CD4-positive, alpha-beta memory T cell (primary cell): ENCODE measurements at regions of chr19 and their contacts with region 1.

Region 1: DNA sequence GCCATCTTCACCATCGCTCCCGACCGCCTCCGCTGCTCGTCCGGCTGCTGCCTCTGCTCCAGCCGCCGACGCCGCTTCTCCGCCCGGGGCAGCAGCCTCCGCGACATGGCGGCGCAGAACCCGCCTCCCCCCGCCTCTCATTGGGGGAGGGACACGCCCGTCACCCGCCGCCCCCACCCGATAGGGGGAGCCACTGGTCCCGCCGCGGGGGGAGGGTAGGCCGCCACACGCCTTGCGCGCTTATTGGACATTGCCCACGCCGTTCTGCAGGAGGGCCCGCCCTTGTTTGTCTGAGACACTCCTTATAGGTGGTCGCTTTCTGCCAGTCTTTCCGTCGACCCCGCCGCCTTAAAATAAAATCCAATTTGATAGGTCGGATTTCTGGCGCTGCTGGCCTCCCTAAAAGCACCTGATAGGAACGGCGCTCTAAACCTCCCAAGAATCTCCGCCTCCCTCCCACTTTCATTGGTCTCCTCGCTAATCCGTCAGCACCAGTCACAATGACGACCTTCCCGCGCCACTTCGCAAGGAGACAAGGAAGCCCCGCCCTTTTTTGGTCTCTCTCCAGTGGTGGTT is at the start of gene HNRNPL:
- DNase-seq: peak; percentile 99 to 100 (median 100)
- H3K4me3 ChIP-seq: peak within 1 kb of the TSS; percentile 94 to 98
- H3K4me3 Mint-ChIP-seq: peak within 1 kb of the TSS; percentile 94 to 97 (median 96)
- H3K27ac ChIP-seq: peak within 1 kb of the TSS; percentile 99
- H3K27ac Mint-ChIP-seq: peak within 1 kb of the TSS; percentile 83 to 100 (median 99)
- H3K4me1 ChIP-seq: peaks cover 58% of the 10 kb centered on the region
- H3K4me1 Mint-ChIP-seq: peaks cover 30 to 72% (median 50%) of the 10 kb centered on the region in 4 donors
- H3K27me3 ChIP-seq: no peaks in the 10 kb centered on the region
- H3K27me3 Mint-ChIP-seq: peaks cover 1% of the 10 kb centered on the region in 2 donors
- total RNA-seq, gene HNRNPL: 329 to 351 TPM

Region 2: GRCh38 chr19:38647368-38647965 is 202.5 kb before region 1 on chr19 and contains the start of gene ACTN4:
- CTCF ChIA-PET with region 1: no interaction called
- POLR2A ChIA-PET with region 1: interaction called, 9 read pairs
- intact Hi-C with region 1: loop called (anchors 1 kb)
- DNase-seq: peak; percentile 98 to 100 (median 100)
- H3K4me3 ChIP-seq: peak within 1 kb of the TSS; percentile 80 to 81
- H3K4me3 Mint-ChIP-seq: peak within 1 kb of the TSS; percentile 91 to 98 (median 95)
- H3K27ac ChIP-seq: peak within 1 kb of the TSS; percentile 74
- H3K27ac Mint-ChIP-seq: peak within 1 kb of the TSS; percentile 85 to 94 (median 91)
- H3K4me1 ChIP-seq: peaks cover 50% of the 10 kb centered on the region
- H3K4me1 Mint-ChIP-seq: peaks cover 29 to 52% (median 41%) of the 10 kb centered on the region in 4 donors
- H3K27me3 ChIP-seq: no peaks in the 10 kb centered on the region
- H3K27me3 Mint-ChIP-seq: no peaks in the 10 kb centered on the region
- total RNA-seq, gene ACTN4: 151 to 155 TPM

Region 3: DNA sequence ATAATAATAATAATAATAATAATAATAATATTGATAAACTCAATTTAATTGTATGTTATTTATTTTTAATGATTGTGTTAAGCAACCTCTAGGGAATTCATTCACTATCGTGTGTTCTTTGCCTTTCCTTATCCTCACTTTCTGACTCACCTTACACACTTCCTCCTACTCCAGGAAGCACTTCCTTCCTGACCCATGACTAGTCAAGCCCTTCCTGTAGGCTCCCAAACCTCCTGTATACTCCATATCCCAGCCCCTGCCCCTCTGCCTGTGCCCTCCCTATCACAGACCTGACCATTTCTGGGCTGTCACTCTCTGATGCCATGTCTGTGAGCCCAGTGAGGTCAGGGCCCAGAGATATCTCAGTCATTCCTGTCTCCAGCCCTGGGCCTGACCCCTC is 44.8 kb before region 1 on chr19:
- CTCF ChIA-PET with region 1: no interaction called
- POLR2A ChIA-PET with region 1: no interaction called
- intact Hi-C with region 1: no loop called
- DNase-seq: no peak
- H3K4me3 ChIP-seq: no peak overlapping the region
- H3K4me3 Mint-ChIP-seq: peak overlapping the region in 1 of 8 donors; percentile 29
- H3K27ac ChIP-seq: no peak overlapping the region
- H3K27ac Mint-ChIP-seq: peak overlapping the region in 2 of 7 donors; percentile 64 to 81
- H3K4me1 ChIP-seq: peaks cover 6% of the 10 kb centered on the region
- H3K4me1 Mint-ChIP-seq: peaks cover 4 to 8% (median 6%) of the 10 kb centered on the region in 4 donors
- H3K27me3 ChIP-seq: no peaks in the 10 kb centered on the region
- H3K27me3 Mint-ChIP-seq: no peaks in the 10 kb centered on the region

Region 4: DNA sequence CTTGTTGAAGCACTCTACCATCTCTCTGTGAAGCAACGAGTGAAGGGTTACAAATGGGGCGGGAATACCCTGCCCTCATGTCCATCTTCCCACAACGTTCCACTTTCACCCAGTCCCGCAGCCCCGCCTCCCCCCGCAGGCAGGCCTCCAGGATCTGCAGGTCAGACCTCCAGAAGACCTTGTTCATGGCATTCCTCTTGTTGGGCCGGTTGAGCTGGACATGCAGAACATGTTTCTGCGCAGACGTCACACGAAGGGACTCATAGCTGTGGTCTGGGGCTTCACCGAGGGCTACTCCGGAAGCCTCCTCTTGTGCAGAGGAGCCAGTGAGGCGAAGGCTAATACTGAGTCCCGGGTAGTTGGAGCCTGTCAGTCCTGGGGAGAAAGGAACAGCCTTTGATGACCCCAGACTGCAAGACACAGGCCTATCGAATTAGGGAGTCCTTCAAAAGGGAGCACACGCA is 18.8 kb before region 1 on chr19:
- CTCF ChIA-PET with region 1: interaction called, 4 read pairs
- POLR2A ChIA-PET with region 1: interaction called, 130 read pairs
- intact Hi-C with region 1: loop called (anchors 1 kb)
- DNase-seq: peak in 1 of 5 donors; percentile 57
- H3K4me3 ChIP-seq: peak overlapping the region; percentile 82 to 87
- H3K4me3 Mint-ChIP-seq: peak overlapping the region; percentile 88 to 95 (median 94)
- H3K27ac ChIP-seq: peak overlapping the region; percentile 79
- H3K27ac Mint-ChIP-seq: peak overlapping the region; percentile 92 to 98 (median 95)
- H3K4me1 ChIP-seq: peaks cover 22% of the 10 kb centered on the region
- H3K4me1 Mint-ChIP-seq: peaks cover 17 to 50% (median 32%) of the 10 kb centered on the region in 4 donors
- H3K27me3 ChIP-seq: no peaks in the 10 kb centered on the region
- H3K27me3 Mint-ChIP-seq: no peaks in the 10 kb centered on the region

Region 5: GRCh38 chr19:38869856-38870607 is 20.1 kb after region 1 on chr19:
- CTCF ChIA-PET with region 1: interaction called, 45 read pairs
- POLR2A ChIA-PET with region 1: interaction called, 297 read pairs
- intact Hi-C with region 1: loop called (anchors 1 kb)
- DNase-seq: peak; percentile 92 to 96 (median 93)
- H3K4me3 ChIP-seq: peak overlapping the region; percentile 29 to 60
- H3K4me3 Mint-ChIP-seq: peak overlapping the region; percentile 88 to 94 (median 91)
- H3K27ac ChIP-seq: peak overlapping the region; percentile 66
- H3K27ac Mint-ChIP-seq: peak overlapping the region; percentile 83 to 97 (median 94)
- H3K4me1 ChIP-seq: peaks cover 40% of the 10 kb centered on the region
- H3K4me1 Mint-ChIP-seq: peaks cover 23 to 53% (median 38%) of the 10 kb centered on the region in 4 donors
- H3K27me3 ChIP-seq: no peaks in the 10 kb centered on the region
- H3K27me3 Mint-ChIP-seq: no peaks in the 10 kb centered on the region

Region 6: GRCh38 chr19:38899447-38900219 is 49.7 kb after region 1 on chr19 and contains the starts of genes NFKBIB and SIRT2:
- CTCF ChIA-PET with region 1: interaction called, 4 read pairs
- POLR2A ChIA-PET with region 1: interaction called, 18 read pairs
- intact Hi-C with region 1: loop called (anchors 1 kb)
- DNase-seq: peak; percentile 98 to 100 (median 100)
- H3K4me3 ChIP-seq: peak within 1 kb of the TSS; percentile 71 to 87
- H3K4me3 Mint-ChIP-seq: peak within 1 kb of the TSS; percentile 92 to 98 (median 96)
- H3K27ac ChIP-seq: peak within 1 kb of the TSS; percentile 99
- H3K27ac Mint-ChIP-seq: peak within 1 kb of the TSS; percentile 90 to 100 (median 99)
- H3K4me1 ChIP-seq: peaks cover 34% of the 10 kb centered on the region
- H3K4me1 Mint-ChIP-seq: peaks cover 17 to 59% (median 39%) of the 10 kb centered on the region in 4 donors
- H3K27me3 ChIP-seq: no peaks in the 10 kb centered on the region
- H3K27me3 Mint-ChIP-seq: no peaks in the 10 kb centered on the region
- total RNA-seq, gene NFKBIB: 23.9 to 26.0 TPM
- total RNA-seq, gene SIRT2: 47.0 to 50.0 TPM

Region 7: GRCh38 chr19:38917516-38918491 is 67.9 kb after region 1 on chr19:
- CTCF ChIA-PET with region 1: no interaction called
- POLR2A ChIA-PET with region 1: no interaction called
- intact Hi-C with region 1: no loop called
- DNase-seq: no peak
- H3K4me3 ChIP-seq: no peak overlapping the region
- H3K4me3 Mint-ChIP-seq: no peak overlapping the region
- H3K27ac ChIP-seq: no peak overlapping the region
- H3K27ac Mint-ChIP-seq: no peak overlapping the region
- H3K4me1 ChIP-seq: no peaks in the 10 kb centered on the region
- H3K4me1 Mint-ChIP-seq: no peaks in the 10 kb centered on the region
- H3K27me3 ChIP-seq: no peaks in the 10 kb centered on the region
- H3K27me3 Mint-ChIP-seq: no peaks in the 10 kb centered on the region

Region 8: DNA sequence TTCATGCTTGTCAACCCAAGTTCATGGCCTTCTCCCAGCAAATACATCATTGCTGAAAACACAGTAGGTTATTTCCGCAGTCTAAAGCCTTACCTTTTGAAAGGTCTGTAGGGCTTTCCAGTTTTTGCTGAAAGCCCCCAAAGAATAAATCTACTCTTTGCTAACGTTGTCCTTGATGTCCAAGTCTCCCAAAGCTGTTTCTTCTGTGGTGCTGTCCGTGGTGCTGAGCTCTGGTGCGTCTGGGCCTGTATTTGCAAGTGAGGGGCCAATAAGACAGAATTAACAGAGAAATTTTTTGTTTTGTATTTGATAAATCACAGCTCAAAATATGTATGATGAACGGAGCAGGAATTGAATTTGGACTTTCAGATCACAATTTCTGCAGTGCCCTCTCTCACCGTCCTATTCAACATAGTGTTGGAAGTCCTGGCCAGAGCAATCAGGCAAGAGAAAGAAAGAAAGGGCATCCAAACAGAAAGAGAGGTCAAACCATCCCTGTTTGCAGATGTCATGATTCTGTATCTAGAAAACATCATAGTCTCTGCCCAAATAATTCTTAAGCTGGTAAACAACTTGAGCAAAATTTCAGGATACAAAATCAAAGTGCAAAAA is 796.0 kb after region 1 on chr19:
- CTCF ChIA-PET with region 1: no interaction called
- POLR2A ChIA-PET with region 1: no interaction called
- intact Hi-C with region 1: no loop called
- DNase-seq: no peak
- H3K4me3 ChIP-seq: no peak overlapping the region
- H3K4me3 Mint-ChIP-seq: no peak overlapping the region
- H3K27ac ChIP-seq: no peak overlapping the region
- H3K27ac Mint-ChIP-seq: no peak overlapping the region
- H3K4me1 ChIP-seq: no peaks in the 10 kb centered on the region
- H3K4me1 Mint-ChIP-seq: no peaks in the 10 kb centered on the region
- H3K27me3 ChIP-seq: peaks cover 14% of the 10 kb centered on the region
- H3K27me3 Mint-ChIP-seq: peaks cover 49 to 51% of the 10 kb centered on the region in 2 donors